ENCODE measurements at regions of chr14 and their contacts with region 1.

Region 1: GRCh38 chr14:24431569-24432258 is 2.0 kb downstream of the KHNYN start:
- DNase-seq: peak; percentile 95
- H3K4me3 Mint-ChIP-seq: peak overlapping the region; percentile 90
- H3K27ac Mint-ChIP-seq: peak overlapping the region; percentile 98
- H3K4me1 Mint-ChIP-seq: peaks cover 56% of the 10 kb centered on the region
- H3K27me3 Mint-ChIP-seq: no peaks in the 10 kb centered on the region

Region 2: DNA sequence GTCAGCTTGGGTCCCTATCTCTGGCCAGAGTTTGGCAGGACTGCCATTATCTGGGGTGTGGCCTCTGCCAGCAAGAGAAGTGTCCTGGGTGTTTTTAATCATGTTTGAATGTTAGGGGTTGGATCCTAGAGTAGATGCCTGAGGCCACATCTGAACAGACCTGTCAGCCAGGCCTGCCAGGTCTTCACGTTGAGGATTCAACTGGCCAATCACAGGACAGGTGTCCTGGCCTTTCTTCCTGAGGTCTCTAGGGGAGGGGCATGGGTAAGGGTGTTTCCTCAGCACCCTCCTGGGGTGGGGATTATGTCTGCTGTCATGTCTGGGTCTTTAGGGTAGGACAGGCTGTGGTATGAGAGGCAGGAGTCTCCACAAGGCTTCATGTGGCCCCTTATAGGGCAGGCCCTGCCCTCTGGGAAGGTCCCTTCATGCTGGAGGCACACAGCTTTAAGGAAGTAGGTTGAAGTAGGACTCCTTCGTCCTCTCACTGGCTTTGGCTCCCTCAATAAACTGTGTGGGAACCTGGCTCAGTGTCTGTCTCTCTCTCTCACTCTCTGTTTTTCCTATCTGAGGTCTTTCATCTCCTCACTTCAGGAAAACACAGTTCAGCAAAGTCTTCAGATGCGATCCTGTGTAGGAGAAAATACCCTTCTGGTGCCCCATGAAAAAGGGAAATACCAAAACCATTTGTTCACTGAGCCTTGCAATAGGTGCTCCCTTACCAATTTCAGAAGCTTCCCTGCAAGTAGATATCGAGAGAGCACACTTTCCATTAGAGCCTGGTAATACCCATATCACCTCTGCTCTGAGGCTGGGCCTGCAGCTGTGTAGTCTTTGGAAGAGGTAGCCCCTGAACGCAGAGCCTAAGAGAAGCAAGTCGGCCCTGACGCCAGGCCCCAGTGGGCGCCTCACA is 308.0 kb before region 1 on chr14:
- CTCF ChIA-PET with region 1: no interaction called
- POLR2A ChIA-PET with region 1: interaction called, 10 read pairs
- DNase-seq: no peak
- H3K4me3 Mint-ChIP-seq: no peak overlapping the region
- H3K27ac Mint-ChIP-seq: no peak overlapping the region
- H3K4me1 Mint-ChIP-seq: peaks cover 9% of the 10 kb centered on the region
- H3K27me3 Mint-ChIP-seq: no peaks in the 10 kb centered on the region

Region 3: DNA sequence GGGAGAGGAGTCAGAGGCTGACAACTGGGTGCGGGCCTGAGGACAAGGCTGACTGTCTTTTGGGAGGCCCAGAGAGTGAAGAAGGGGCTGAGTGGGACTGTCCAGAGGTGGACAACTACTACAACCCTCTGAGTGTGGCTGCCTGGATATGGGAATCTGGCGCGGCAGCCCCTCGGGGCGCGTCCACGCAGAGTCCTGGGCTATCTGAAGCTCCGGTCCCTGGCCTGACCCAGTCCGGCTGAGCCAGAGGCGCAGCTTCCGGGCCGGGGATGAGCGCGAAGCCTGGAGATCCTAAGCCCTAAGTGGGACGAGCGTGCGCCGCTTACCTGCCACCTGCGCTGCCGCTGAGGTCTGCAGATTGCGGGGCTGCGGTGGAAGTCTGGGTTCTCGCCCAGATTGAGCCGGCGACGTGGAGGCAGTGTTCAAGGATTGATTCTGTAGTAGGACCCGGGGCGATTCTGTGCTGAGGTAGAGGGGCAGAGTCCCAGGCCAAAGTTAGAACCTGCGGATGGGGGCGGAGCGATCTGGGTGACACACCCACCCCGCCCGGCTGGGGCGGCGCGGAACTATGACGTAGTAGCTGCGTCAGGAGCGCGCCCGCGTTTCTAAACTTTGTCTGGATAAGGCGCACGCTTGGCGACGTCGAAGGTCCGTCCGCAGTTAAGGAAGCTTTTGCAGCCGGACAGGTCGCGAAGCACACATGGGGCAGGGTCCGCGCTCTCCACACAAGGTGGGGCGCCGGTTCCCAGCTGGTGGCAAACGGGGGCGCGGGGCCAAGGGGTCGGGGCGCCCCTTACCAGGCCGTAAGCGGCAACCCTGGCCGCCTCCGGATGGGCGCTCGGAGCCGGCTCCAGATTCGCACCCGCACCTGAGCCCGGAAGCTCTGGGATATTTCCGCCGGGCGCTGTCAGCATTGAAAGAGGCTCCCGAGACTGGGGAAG is 132.2 kb before region 1 on chr14 and contains the starts of genes DHRS1 and NOP9:
- CTCF ChIA-PET with region 1: interaction called, 13 read pairs
- POLR2A ChIA-PET with region 1: no interaction called
- DNase-seq: peak; percentile 92
- H3K4me3 Mint-ChIP-seq: peak within 1 kb of the TSS; percentile 89
- H3K27ac Mint-ChIP-seq: peak within 1 kb of the TSS; percentile 93
- H3K4me1 Mint-ChIP-seq: peaks cover 53% of the 10 kb centered on the region
- H3K27me3 Mint-ChIP-seq: no peaks in the 10 kb centered on the region
- total RNA-seq, gene DHRS1: 31.7 to 35.0 TPM
- total RNA-seq, gene NOP9: 30.8 to 35.2 TPM

Region 4: GRCh38 chr14:24317141-24317928 is 114.4 kb before region 1 on chr14:
- CTCF ChIA-PET with region 1: interaction called, 11 read pairs
- POLR2A ChIA-PET with region 1: interaction called, 3 read pairs
- DNase-seq: no peak
- H3K4me3 Mint-ChIP-seq: no peak overlapping the region
- H3K27ac Mint-ChIP-seq: no peak overlapping the region
- H3K4me1 Mint-ChIP-seq: peaks cover 43% of the 10 kb centered on the region
- H3K27me3 Mint-ChIP-seq: peaks cover 8% of the 10 kb centered on the region

Region 5: DNA sequence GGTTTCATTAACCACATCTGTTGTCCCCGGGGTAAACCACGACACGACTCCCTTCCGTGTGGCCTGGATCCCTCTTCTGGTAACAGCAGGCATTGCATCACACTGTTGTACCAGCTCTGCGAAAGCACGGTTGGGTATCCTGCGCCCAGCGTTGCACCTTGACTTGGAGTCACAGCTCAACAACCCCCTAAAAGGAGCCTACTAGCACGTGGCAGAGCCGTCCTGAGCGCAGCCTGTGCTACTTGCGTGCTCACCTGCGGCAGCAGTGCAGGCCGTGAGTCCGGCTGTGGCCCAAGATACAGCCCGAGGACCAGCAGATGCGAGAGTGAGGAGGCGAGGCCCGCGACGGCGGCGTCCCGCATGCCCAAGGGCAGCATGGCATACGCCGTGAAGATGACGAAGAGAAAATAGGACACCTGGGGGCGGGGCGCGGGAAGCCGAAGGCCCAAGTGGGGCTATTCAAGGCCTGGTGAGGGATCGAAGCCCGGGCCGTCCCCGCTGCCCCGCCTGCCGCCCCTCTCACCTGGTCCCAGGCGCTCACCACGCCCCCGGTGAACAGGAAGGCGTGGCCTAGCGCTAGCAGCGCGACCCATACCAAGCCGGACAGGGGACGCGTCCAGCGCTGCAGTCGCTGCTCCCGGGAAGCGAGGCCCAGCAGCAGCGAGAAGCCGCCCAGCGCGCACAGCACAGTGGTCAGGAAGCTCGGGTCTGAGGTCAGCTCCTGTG is 99.3 kb before region 1 on chr14:
- CTCF ChIA-PET with region 1: interaction called, 108 read pairs
- POLR2A ChIA-PET with region 1: interaction called, 18 read pairs
- DNase-seq: peak; percentile 92
- H3K4me3 Mint-ChIP-seq: peak overlapping the region; percentile 30
- H3K27ac Mint-ChIP-seq: peak overlapping the region; percentile 74
- H3K4me1 Mint-ChIP-seq: peaks cover 64% of the 10 kb centered on the region
- H3K27me3 Mint-ChIP-seq: peaks cover 38% of the 10 kb centered on the region

Region 6: GRCh38 chr14:24362241-24362970 is 69.3 kb before region 1 on chr14:
- CTCF ChIA-PET with region 1: interaction called, 14 read pairs
- POLR2A ChIA-PET with region 1: no interaction called
- DNase-seq: no peak
- H3K4me3 Mint-ChIP-seq: no peak overlapping the region
- H3K27ac Mint-ChIP-seq: no peak overlapping the region
- H3K4me1 Mint-ChIP-seq: peaks cover 17% of the 10 kb centered on the region
- H3K27me3 Mint-ChIP-seq: peaks cover 54% of the 10 kb centered on the region

Region 7: DNA sequence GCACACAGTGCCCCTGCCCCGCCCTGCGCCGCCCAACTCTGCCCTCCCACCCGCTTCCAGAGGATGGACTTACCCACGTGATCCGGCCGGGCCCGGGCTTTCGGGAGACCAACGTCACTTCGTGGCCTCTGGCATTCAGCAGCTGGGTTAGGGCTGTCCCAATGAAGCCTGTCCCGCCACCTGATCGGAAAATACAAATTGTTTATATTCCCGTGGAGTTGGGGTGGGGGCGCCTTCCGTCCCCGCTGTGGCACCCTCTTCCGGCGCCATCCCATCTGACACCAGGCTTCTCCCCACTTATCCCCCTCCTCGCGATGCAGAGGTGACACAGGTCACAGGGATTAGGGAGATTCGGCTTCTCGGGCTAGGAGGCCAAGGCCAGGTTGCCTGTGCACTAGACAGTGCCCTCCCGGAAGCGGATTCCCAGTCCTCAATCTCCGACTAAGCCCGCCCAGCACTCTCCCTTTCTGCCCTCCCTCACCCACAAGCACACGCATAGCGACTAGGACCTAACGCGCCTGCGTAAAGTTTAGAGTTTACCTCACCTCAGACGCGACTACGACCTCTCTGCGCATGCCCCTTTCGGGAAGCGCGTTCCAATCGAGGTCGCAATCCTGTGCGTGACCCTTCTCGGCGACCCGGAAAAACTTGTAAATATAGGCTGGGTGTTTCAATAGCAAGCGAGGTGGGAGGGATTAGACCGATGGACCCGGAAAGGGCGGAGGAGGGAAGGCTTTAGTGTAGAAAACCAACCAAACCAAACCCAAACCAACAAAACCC is 10.7 kb after region 1 on chr14 and contains the start of gene SDR39U1:
- CTCF ChIA-PET with region 1: interaction called, 57 read pairs
- POLR2A ChIA-PET with region 1: interaction called, 6 read pairs
- DNase-seq: peak; percentile 99
- H3K4me3 Mint-ChIP-seq: peak within 1 kb of the TSS; percentile 90
- H3K27ac Mint-ChIP-seq: peak within 1 kb of the TSS; percentile 96
- H3K4me1 Mint-ChIP-seq: peaks cover 53% of the 10 kb centered on the region
- H3K27me3 Mint-ChIP-seq: no peaks in the 10 kb centered on the region
- total RNA-seq, gene SDR39U1: 52.8 to 54.9 TPM

Region 8: GRCh38 chr14:24576771-24577170 is 145.1 kb after region 1 on chr14:
- CTCF ChIA-PET with region 1: no interaction called
- POLR2A ChIA-PET with region 1: no interaction called
- DNase-seq: no peak
- H3K4me3 Mint-ChIP-seq: no peak overlapping the region
- H3K27ac Mint-ChIP-seq: no peak overlapping the region
- H3K4me1 Mint-ChIP-seq: peaks cover 9% of the 10 kb centered on the region
- H3K27me3 Mint-ChIP-seq: peaks cover 2% of the 10 kb centered on the region